Calu3 (cell line): ENCODE measurements at regions of chr2 and their contacts with region 1.

Region 1: GRCh38 chr2:128232965-128233789 is 85.5 kb downstream of the HS6ST1 start:
- DNase-seq: peak; percentile 92
- H3K4me3 Mint-ChIP-seq: peak overlapping the region; percentile 73
- H3K27ac Mint-ChIP-seq: no peak overlapping the region
- H3K4me1 Mint-ChIP-seq: no peaks in the 10 kb centered on the region
- H3K27me3 Mint-ChIP-seq: peaks cover 32% of the 10 kb centered on the region
- CTCF ChIP-seq: peak; percentile 84

Region 2: DNA sequence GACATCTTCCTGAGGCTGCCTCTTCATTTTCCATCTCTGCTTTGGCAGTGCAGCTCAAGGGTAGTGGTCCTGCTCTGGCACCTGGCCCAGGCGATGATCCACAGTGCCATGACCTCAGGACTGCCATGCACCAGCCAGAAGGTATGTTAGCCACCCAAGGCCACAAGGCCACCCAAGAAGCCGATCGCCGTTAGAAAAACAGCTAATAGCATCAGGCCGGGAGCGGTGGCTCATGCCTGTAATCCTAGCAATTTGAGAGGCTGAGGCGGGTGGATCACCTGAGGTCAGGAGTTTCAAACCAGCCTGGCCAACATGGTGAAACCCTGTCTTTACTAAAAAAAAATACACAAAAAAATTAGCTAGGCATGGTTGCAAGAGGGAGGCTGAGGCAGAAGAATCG is 170.6 kb before region 1 on chr2:
- CTCF ChIA-PET with region 1: no interaction called
- intact Hi-C with region 1: loop called (anchors 2 kb)
- DNase-seq: no peak
- H3K4me3 Mint-ChIP-seq: no peak overlapping the region
- H3K27ac Mint-ChIP-seq: no peak overlapping the region
- H3K4me1 Mint-ChIP-seq: no peaks in the 10 kb centered on the region
- H3K27me3 Mint-ChIP-seq: peaks cover 7% of the 10 kb centered on the region
- CTCF ChIP-seq: no peak

Region 3: GRCh38 chr2:128305159-128306087 is 72.2 kb after region 1 on chr2:
- CTCF ChIA-PET with region 1: no interaction called
- intact Hi-C with region 1: loop called (anchors 1 kb)
- DNase-seq: peak; percentile 72
- H3K4me3 Mint-ChIP-seq: peak overlapping the region; percentile 21
- H3K27ac Mint-ChIP-seq: no peak overlapping the region
- H3K4me1 Mint-ChIP-seq: peaks cover 5% of the 10 kb centered on the region
- H3K27me3 Mint-ChIP-seq: no peaks in the 10 kb centered on the region
- CTCF ChIP-seq: no peak

Region 4: DNA sequence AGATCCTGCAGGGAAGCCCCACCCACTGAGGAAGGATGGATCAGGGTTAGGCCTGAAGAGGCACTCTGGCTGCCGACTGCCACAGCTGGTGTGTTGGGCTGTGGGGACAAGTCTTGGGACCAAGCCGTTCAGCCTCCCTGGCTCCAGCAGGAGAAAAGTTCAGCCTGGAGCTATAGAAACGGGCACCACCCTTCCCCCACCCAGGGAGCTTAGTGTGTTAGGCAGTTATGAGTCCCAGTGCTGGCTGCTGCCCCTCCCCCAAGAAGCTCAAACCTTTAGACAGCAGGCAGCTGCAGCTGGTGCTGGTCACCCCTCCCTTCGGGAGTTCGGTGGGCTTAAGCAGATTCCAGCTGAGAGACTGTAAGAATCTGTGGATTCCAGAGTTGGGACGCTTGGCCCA is 532.6 kb after region 1 on chr2:
- CTCF ChIA-PET with region 1: no interaction called
- intact Hi-C with region 1: no loop called
- DNase-seq: no peak
- H3K4me3 Mint-ChIP-seq: no peak overlapping the region
- H3K27ac Mint-ChIP-seq: no peak overlapping the region
- H3K4me1 Mint-ChIP-seq: no peaks in the 10 kb centered on the region
- H3K27me3 Mint-ChIP-seq: peaks cover 15% of the 10 kb centered on the region
- CTCF ChIP-seq: no peak